B cell (primary cell): ENCODE measurements at regions of chr12 and their contacts with region 1.

Region 1: DNA sequence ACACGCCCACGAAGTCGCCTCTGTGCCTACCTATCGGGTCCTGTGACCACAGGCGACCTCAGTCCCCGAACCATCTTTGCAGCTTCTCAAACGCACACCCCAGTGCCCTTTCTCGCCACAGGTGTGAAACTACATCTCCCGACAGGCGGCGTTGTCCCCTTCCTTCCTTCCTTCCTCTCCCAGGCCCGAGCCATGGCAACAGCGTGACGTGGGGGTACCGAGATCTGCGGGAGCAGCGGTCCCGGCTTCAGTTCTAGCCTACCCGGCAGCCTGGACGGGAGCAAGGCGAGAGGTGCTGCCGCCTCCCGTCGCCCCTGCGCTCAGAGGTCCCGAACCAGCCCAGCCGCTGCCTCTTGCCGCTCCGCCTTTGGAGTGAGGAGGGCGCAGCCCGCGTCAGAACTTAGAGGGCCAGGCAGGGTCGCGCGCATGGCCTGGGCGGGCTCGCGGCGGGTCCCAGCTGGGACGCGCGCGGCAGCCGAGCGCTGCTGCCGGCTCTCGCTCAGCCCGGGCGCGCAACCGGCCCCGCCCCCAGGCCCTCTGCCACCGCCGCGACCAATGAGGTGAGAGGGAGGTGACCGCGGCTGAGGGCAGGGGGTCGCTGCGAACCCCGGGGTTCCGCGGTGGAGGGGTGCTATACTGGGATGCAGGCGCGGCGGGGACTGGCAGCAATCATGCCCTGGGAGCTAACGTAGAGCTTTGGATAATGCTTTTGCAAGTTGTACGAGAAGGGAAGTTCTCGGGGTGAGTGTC is at the start of gene COQ10A:
- DNase-seq: peak; percentile 94
- ATAC-seq: peak; percentile 89
- H3K4me3 ChIP-seq: peak within 1 kb of the TSS; percentile 65 to 86 (median 75)
- H3K4me3 Mint-ChIP-seq: peak within 1 kb of the TSS; percentile 91
- H3K27ac ChIP-seq: peak within 1 kb of the TSS; percentile 94
- H3K27ac Mint-ChIP-seq: peak within 1 kb of the TSS; percentile 95
- H3K4me1 ChIP-seq: peaks cover 10 to 15% of the 10 kb centered on the region in 2 donors
- H3K4me1 Mint-ChIP-seq: peaks cover 20% of the 10 kb centered on the region
- H3K27me3 ChIP-seq: no peaks in the 10 kb centered on the region
- H3K27me3 Mint-ChIP-seq: no peaks in the 10 kb centered on the region
- CTCF ChIP-seq: peak; percentile 72
- total RNA-seq, gene COQ10A: 73.5 and 76.3 TPM in 2 replicates

Region 2: GRCh38 chr12:56206457-56207166 is 60.3 kb before region 1 on chr12:
- CTCF ChIA-PET with region 1: interaction called, 15 read pairs
- POLR2A ChIA-PET with region 1: interaction called, 5 read pairs
- intact Hi-C with region 1: no loop called
- DNase-seq: peak; percentile 65
- ATAC-seq: no peak
- H3K4me3 ChIP-seq: no peak overlapping the region
- H3K4me3 Mint-ChIP-seq: no peak overlapping the region
- H3K27ac ChIP-seq: peak overlapping the region in 1 of 2 donors; percentile 65
- H3K27ac Mint-ChIP-seq: peak overlapping the region; percentile 89
- H3K4me1 ChIP-seq: peaks cover 9 to 18% of the 10 kb centered on the region in 2 donors
- H3K4me1 Mint-ChIP-seq: peaks cover 47% of the 10 kb centered on the region
- H3K27me3 ChIP-seq: no peaks in the 10 kb centered on the region
- H3K27me3 Mint-ChIP-seq: no peaks in the 10 kb centered on the region
- CTCF ChIP-seq: peak; percentile 63

Region 3: GRCh38 chr12:56315622-56316473 is 49.0 kb after region 1 on chr12 and contains the start of gene CNPY2:
- CTCF ChIA-PET with region 1: interaction called, 4 read pairs
- POLR2A ChIA-PET with region 1: interaction called, 8 read pairs
- intact Hi-C with region 1: loop called (anchors 1 kb)
- DNase-seq: peak; percentile 99
- ATAC-seq: peak; percentile 86
- H3K4me3 ChIP-seq: peak within 1 kb of the TSS; percentile 78 to 94 (median 91)
- H3K4me3 Mint-ChIP-seq: peak within 1 kb of the TSS; percentile 99
- H3K27ac ChIP-seq: peak within 1 kb of the TSS; percentile 67 to 90
- H3K27ac Mint-ChIP-seq: peak within 1 kb of the TSS; percentile 99
- H3K4me1 ChIP-seq: peaks cover 12 to 15% of the 10 kb centered on the region in 2 donors
- H3K4me1 Mint-ChIP-seq: peaks cover 10% of the 10 kb centered on the region
- H3K27me3 ChIP-seq: no peaks in the 10 kb centered on the region
- H3K27me3 Mint-ChIP-seq: no peaks in the 10 kb centered on the region
- CTCF ChIP-seq: no peak
- total RNA-seq, gene CNPY2: 89.0 and 91.2 TPM in 2 replicates